ENCODE measurements at regions of chr3 and their contacts with region 1.

Region 1: GRCh38 chr3:64030741-64031140 is 7.4 kb upstream of the PSMD6 start:
- DNase-seq: peak; percentile 81 to 89 (median 86)
- H3K4me3 ChIP-seq: peak overlapping the region in 2 of 3 donors; percentile 18 to 60
- H3K27ac ChIP-seq: no peak overlapping the region
- H3K4me1 ChIP-seq: peaks cover 0 to 2% (median 0%) of the 10 kb centered on the region in 3 donors
- H3K27me3 ChIP-seq: no peaks in the 10 kb centered on the region
- CTCF ChIP-seq: peak; percentile 94

Region 2: GRCh38 chr3:64399205-64399800 is 368.6 kb after region 1 on chr3:
- intact Hi-C with region 1: loop called (anchors 5 kb)
- DNase-seq: peak in 4 of 5 donors; percentile 38 to 84 (median 63)
- H3K4me3 ChIP-seq: no peak overlapping the region
- H3K27ac ChIP-seq: no peak overlapping the region
- H3K4me1 ChIP-seq: no peaks in the 10 kb centered on the region
- H3K27me3 ChIP-seq: no peaks in the 10 kb centered on the region
- CTCF ChIP-seq: peak; percentile 65

Region 3: DNA sequence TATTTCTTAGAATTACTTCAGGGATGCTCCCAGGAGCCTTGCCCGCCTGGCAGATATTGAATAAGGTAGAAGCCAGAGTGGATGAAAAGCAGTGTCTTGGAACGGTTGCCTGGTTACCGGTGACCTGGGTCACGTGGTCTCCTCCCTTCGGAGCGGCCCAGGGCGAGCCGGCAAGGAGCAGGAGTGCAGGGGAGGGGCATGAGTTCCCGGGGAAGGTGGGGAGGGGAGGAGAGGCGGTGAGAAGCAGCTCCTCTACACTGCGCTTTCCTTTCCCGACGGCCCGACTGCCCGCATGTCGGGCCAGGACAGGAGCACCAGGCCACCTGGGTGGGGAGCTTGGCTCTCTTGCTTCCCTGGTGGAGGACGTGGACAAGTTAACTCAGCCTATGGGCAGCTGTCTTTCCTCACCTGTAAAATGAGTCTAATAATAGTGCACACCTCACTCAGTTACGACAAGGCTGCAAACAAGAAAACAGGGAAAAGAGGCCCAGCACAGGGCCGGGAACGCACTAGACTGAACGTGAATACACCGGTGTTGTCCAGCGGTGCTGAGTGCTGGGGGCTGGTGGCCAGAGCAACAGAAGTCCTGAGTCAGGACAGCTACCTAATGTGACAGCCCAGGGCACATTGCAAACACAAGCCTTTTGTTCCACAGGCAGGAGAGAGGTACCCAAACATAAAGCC is 458.8 kb after region 1 on chr3:
- intact Hi-C with region 1: loop called (anchors 5 kb)
- DNase-seq: peak; percentile 93 to 97 (median 97)
- H3K4me3 ChIP-seq: peak overlapping the region in 1 of 3 donors; percentile 7
- H3K27ac ChIP-seq: peak overlapping the region; percentile 77 to 82
- H3K4me1 ChIP-seq: peaks cover 0 to 19% (median 17%) of the 10 kb centered on the region in 3 donors
- H3K27me3 ChIP-seq: no peaks in the 10 kb centered on the region
- CTCF ChIP-seq: no peak